ENCODE measurements at regions of chr17 and their contacts with region 1.

Region 1: GRCh38 chr17:27433521-27433920 is 22.7 kb upstream of the KSR1 start:
- DNase-seq: no peak
- ATAC-seq: no peak
- H3K4me3 ChIP-seq: no peak overlapping the region
- H3K4me3 Mint-ChIP-seq: no peak overlapping the region
- H3K27ac ChIP-seq: no peak overlapping the region
- H3K27ac Mint-ChIP-seq: no peak overlapping the region
- H3K4me1 ChIP-seq: no peaks in the 10 kb centered on the region
- H3K4me1 Mint-ChIP-seq: no peaks in the 10 kb centered on the region
- H3K27me3 ChIP-seq: no peaks in the 10 kb centered on the region
- H3K27me3 Mint-ChIP-seq: peaks cover 0 to 3% (median 0%) of the 10 kb centered on the region in 5 donors

Region 2: GRCh38 chr17:27407916-27408846 is 25.3 kb before region 1 on chr17:
- CTCF ChIA-PET with region 1: no interaction called
- POLR2A ChIA-PET with region 1: no interaction called
- intact Hi-C with region 1: loop called in 1 of 2 experiments (anchors 2 kb)
- DNase-seq: no peak
- ATAC-seq: no peak
- H3K4me3 ChIP-seq: no peak overlapping the region
- H3K4me3 Mint-ChIP-seq: no peak overlapping the region
- H3K27ac ChIP-seq: no peak overlapping the region
- H3K27ac Mint-ChIP-seq: no peak overlapping the region
- H3K4me1 ChIP-seq: no peaks in the 10 kb centered on the region
- H3K4me1 Mint-ChIP-seq: no peaks in the 10 kb centered on the region
- H3K27me3 ChIP-seq: no peaks in the 10 kb centered on the region
- H3K27me3 Mint-ChIP-seq: peaks cover 0 to 9% (median 0%) of the 10 kb centered on the region in 5 donors

Region 3: DNA sequence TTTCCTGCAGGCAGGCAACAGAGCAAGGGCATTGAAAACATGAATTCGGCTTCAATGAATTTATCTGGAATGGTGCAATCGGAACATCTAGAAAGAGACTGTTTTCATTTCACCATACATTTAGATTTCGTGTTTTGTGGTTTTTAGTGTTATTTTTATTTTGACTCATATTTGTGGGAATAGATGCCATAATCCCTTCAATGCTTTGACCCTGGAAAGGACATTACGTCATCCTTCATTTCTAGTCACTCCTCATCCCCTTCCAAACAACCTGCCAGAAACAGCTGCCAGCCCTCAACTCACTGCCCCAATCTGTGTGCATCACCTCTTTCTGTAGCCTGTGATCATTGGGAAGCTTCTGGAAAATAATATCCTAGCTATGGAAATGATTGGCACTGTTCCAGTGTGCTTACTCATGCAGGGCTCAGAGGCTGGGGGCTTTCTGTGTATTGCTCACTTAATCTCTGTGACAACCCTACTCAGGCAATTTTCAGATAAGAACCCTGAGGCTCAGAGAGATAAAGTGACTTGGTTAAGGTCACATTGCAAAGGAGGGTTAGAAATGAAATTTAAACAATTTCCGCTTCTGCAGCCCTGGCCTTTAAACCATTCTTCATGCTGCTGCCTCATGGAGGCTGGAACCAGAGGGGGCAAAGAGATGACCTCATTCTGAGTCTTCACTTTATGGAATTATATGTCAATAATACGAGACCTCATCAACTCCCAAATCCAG is 13.2 kb after region 1 on chr17:
- CTCF ChIA-PET with region 1: no interaction called
- POLR2A ChIA-PET with region 1: no interaction called
- intact Hi-C with region 1: no loop called
- DNase-seq: no peak
- ATAC-seq: no peak
- H3K4me3 ChIP-seq: no peak overlapping the region
- H3K4me3 Mint-ChIP-seq: no peak overlapping the region
- H3K27ac ChIP-seq: no peak overlapping the region
- H3K27ac Mint-ChIP-seq: no peak overlapping the region
- H3K4me1 ChIP-seq: no peaks in the 10 kb centered on the region
- H3K4me1 Mint-ChIP-seq: peaks cover 0 to 5% (median 0%) of the 10 kb centered on the region in 7 donors
- H3K27me3 ChIP-seq: no peaks in the 10 kb centered on the region
- H3K27me3 Mint-ChIP-seq: peaks cover 0 to 19% (median 0%) of the 10 kb centered on the region in 5 donors